Tibial artery (tissue), 4 donors: ENCODE measurements at regions of chr2 and their contacts with region 1.

Region 1: GRCh38 chr2:177552422-177553175 is 160.0 kb downstream of the AGPS start:
- DNase-seq: peak; percentile 80 to 89
- H3K4me3 ChIP-seq: peak overlapping the region; percentile 73 to 75
- H3K27ac ChIP-seq: peak overlapping the region; percentile 81 to 94
- H3K4me1 ChIP-seq: peaks cover 0 to 5% (median 2%) of the 10 kb centered on the region in 4 donors
- H3K27me3 ChIP-seq: no peaks in the 10 kb centered on the region
- CTCF ChIP-seq: no peak

Region 2: DNA sequence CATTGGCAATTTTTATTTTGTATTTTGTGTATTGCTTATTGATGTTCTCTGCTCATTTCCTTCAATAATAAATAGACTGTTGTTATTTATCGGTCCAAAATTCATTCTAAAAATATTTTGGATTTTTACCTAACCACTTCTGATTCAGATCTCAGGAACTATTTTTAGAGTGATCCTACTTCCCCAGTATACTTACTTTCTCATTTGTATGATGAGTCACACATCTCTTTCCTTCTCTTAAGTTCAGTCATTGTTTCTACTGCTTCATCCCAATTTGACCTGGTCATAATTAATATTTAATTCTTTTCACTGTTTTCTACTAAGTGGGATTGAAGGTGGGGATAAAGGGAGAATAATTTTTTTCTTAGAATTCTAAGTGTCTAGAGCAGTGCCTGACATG is 85.0 kb before region 1 on chr2:
- intact Hi-C with region 1: no loop called
- DNase-seq: no peak
- H3K4me3 ChIP-seq: no peak overlapping the region
- H3K27ac ChIP-seq: no peak overlapping the region
- H3K4me1 ChIP-seq: peaks cover 0 to 5% (median 0%) of the 10 kb centered on the region in 4 donors
- H3K27me3 ChIP-seq: no peaks in the 10 kb centered on the region
- CTCF ChIP-seq: no peak

Region 3: DNA sequence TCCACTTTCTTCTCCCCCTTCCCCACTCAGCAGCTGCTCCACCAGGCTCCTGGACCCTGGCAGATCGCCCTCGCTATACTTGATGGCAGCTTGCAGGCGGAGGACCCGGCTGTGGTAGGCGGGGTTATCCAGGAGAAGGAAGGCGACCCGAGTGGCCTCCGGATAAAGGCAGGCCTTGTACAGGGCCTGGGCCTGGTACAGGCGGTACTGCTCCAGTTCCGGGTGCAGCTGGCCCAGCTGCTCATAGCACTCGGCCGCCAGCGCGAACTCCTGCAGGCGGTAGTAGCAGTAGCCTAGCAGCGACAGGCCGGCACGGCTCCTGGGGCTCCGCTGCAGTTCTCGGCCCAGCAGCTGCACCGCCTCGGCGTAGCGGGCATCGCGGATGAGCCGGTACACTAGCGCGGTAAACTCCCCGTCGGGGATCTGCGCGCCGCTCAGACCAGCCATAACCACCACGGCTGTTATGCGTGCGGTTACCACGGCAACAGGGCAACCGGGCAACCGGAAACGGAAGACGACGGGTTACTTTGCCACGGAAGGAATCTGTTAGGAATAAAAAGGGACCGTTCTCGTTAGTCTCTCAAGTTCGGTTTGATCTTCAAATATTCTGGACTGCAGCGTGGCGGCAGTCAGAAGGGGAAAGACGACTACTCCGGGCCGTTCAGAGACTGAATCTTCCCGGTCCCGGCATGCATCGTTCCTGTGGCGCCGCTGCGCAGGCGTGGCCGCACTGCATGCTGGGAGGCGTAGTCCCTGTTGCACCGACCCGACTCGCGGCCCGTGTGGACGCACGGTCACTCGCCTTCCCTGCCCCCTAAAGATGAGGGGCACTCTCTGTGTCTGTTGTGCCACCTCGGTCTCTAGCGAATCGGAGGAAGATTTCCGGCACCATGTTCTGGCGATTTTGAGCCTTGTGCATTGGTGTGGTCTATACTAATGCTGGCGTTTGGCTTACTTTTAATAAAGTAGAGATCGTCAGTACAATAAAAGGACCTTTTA is 66.0 kb after region 1 on chr2:
- intact Hi-C with region 1: loop called (anchors 5 kb)
- DNase-seq: peak; percentile 94
- H3K4me3 ChIP-seq: peak overlapping the region; percentile 71 to 73
- H3K27ac ChIP-seq: peak overlapping the region; percentile 88 to 93
- H3K4me1 ChIP-seq: peaks cover 0 to 5% (median 3%) of the 10 kb centered on the region in 4 donors
- H3K27me3 ChIP-seq: no peaks in the 10 kb centered on the region
- CTCF ChIP-seq: no peak

Region 4: GRCh38 chr2:177939211-177939610 is 386.6 kb after region 1 on chr2:
- intact Hi-C with region 1: no loop called
- DNase-seq: no peak
- H3K4me3 ChIP-seq: no peak overlapping the region
- H3K27ac ChIP-seq: no peak overlapping the region
- H3K4me1 ChIP-seq: peaks cover 0 to 3% (median 0%) of the 10 kb centered on the region in 4 donors
- H3K27me3 ChIP-seq: no peaks in the 10 kb centered on the region
- CTCF ChIP-seq: no peak